A549 (cell line): ENCODE measurements at regions of chr4 and their contacts with region 1.

Region 1: DNA sequence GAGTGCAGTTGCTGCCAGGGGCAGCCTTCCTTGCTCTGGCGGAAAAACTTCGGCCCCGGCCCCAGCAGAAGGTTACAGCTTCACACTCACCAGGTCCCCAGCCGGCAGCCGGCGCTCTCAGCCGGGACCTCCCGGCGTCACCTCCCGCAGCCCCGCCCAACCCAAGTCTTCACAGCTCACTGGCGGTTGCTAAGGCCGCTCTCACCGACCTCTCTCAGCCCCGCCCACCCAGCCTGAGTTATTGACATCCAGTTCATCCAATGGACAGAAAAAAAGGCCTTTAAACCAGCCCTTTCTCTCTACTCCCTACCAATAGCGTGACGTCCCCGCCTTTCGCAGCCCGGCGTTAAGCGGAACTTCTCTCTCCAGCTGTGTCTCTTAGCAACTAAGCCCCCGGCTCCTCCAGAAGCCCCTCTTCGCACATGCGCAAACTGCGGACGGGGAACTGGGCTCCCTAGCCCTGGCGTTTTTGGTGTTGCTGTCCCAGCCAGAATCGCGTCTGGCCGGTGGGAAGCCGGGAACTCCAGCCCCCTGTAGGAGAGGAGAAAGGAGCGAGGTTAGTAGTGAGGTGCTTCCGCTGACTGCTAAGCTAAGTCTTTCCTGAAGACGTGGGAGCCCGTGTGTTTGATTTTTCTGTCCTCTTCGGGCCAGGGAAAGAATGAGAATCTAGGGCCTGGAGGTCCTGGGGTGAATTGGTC is at the start of gene BBS12:
- DNase-seq: peak; percentile 96 to 98
- ATAC-seq: peak; percentile 97 to 98
- H3K4me3 ChIP-seq: peak within 1 kb of the TSS; percentile 53
- H3K27ac ChIP-seq: peak within 1 kb of the TSS; percentile 51 to 85
- H3K4me1 ChIP-seq: peaks cover 12% of the 10 kb centered on the region; the same call in 2 of the 3 replicates
- CTCF ChIP-seq: peak; percentile 45
- EP300 ChIP-seq: no peak
- POLR2A ChIP-seq: peak; percentile 25
- RAD21 ChIP-seq: peak; percentile 42 to 50
- polyA plus RNA-seq, gene BBS12: 3.4 and 3.7 TPM in 2 replicates

Region 2: DNA sequence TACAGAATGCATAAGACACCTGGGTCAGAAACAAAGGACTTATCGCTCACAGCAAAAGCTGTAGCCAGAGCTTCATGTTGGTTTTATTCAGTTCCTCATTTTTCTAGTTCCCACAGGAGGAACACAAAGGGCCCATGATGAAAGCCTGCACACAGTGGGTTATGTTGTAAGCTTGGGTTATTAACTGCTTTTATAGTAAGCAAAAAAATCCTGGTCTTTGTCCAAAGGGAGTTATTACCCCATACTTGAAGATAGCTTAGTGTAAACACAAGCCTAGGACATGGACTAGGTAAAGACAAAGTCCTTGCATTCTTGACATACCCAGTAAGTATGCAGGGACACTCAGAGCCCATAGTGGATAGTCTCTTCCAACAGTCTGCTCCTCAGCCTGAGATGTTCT is 11.8 kb after region 1 on chr4:
- CTCF ChIA-PET with region 1: interaction called, 10 read pairs
- POLR2A ChIA-PET with region 1: interaction called, 5 read pairs
- DNase-seq: peak in 1 of 2 experiments; percentile 57
- ATAC-seq: peak; percentile 85 to 95
- H3K4me3 ChIP-seq: no peak overlapping the region
- H3K27ac ChIP-seq: peak overlapping the region; percentile 57 to 74; a peak in 5 of 6 replicates
- H3K4me1 ChIP-seq: peaks cover 18% of the 10 kb centered on the region
- CTCF ChIP-seq: no peak
- EP300 ChIP-seq: no peak
- POLR2A ChIP-seq: no peak
- RAD21 ChIP-seq: no peak